H1 (cell line): ENCODE measurements at regions of chr10 and their contacts with region 1.

Region 1: GRCh38 chr10:100551196-100551595 is 15.5 kb downstream of the HIF1AN start:
- DNase-seq: no peak
- H3K4me3 ChIP-seq: no peak overlapping the region
- H3K27ac ChIP-seq: no peak overlapping the region
- H3K4me1 ChIP-seq: no peaks in the 10 kb centered on the region
- H3K27me3 ChIP-seq: no peaks in the 10 kb centered on the region
- CTCF ChIP-seq: no peak
- EP300 ChIP-seq: no peak
- POLR2A ChIP-seq: no peak
- RAD21 ChIP-seq: no peak

Region 2: DNA sequence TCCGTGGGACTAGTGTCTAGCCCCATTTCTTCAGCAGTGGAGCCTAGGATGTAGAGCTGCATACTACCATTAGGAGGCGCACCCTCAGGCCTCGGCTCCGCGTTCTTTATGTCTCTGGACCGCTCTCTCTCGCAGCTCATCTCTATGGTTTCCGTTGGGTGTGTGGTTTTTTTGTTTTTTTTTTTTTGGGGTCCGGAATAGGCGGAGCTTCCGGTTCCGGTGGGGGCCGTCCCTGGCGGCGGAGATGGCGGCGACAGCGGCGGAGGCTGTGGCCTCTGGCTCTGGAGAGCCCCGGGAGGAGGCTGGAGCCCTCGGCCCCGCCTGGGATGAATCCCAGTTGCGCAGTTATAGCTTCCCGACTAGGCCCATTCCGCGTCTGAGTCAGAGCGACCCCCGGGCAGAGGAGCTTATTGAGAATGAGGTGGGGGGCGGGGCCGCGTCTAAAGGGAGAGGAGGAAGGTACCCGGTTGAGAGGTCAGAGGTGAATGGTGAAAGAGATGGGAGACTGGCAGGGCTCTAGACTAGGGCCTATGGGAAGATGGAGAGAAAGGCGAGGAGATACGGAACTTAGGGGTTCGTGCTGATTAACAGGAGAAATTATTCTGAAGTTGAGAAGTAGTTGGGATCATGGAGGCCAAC is 15.4 kb before region 1 on chr10 and contains the start of gene HIF1AN:
- CTCF ChIA-PET with region 1: interaction called, 16 read pairs
- POLR2A ChIA-PET with region 1: interaction called, 41 read pairs
- DNase-seq: peak; percentile 84 to 87
- H3K4me3 ChIP-seq: peak within 1 kb of the TSS; percentile 59 to 94 (median 91)
- H3K27ac ChIP-seq: no peak within 1 kb of the TSS
- H3K4me1 ChIP-seq: peaks cover 0 to 9% (median 5%) of the 10 kb centered on the region in 4 experiments; a peak in 5 of 7 replicates
- H3K27me3 ChIP-seq: no peaks in the 10 kb centered on the region
- CTCF ChIP-seq: peak; percentile 90 to 94 (median 91)
- EP300 ChIP-seq: no peak
- POLR2A ChIP-seq: peak; percentile 77 to 90
- RAD21 ChIP-seq: peak in 1 of 2 experiments; percentile 4; a peak in 1 of 4 replicates
- total RNA-seq, gene HIF1AN: 59.7 and 62.8 TPM in 2 replicates

Region 3: GRCh38 chr10:100586959-100587358 is 35.8 kb after region 1 on chr10:
- CTCF ChIA-PET with region 1: no interaction called
- POLR2A ChIA-PET with region 1: no interaction called
- DNase-seq: no peak
- H3K4me3 ChIP-seq: no peak overlapping the region
- H3K27ac ChIP-seq: no peak overlapping the region
- H3K4me1 ChIP-seq: no peaks in the 10 kb centered on the region
- H3K27me3 ChIP-seq: no peaks in the 10 kb centered on the region; a peak in 1 of 7 replicates
- CTCF ChIP-seq: peak in 1 of 3 experiments; percentile 12; a peak in 1 of 4 replicates
- EP300 ChIP-seq: no peak
- POLR2A ChIP-seq: no peak
- RAD21 ChIP-seq: no peak